Ascending aorta (tissue), 2 donors: ENCODE measurements at regions of chr10 and their contacts with region 1.

Region 1: GRCh38 chr10:31118556-31118955 is 86.9 kb upstream of the ZNF438 start:
- DNase-seq: peak in 1 of 2 donors; percentile 75
- H3K4me3 ChIP-seq: no peak overlapping the region
- H3K27ac ChIP-seq: peak overlapping the region; percentile 75 to 86
- H3K4me1 ChIP-seq: peaks cover 8 to 24% of the 10 kb centered on the region in 2 donors
- H3K27me3 ChIP-seq: no peaks in the 10 kb centered on the region
- CTCF ChIP-seq: no peak

Region 2: GRCh38 chr10:31075434-31075833 is 43.1 kb before region 1 on chr10:
- intact Hi-C with region 1: loop called (anchors 2 kb)
- DNase-seq: no peak
- H3K4me3 ChIP-seq: no peak overlapping the region
- H3K27ac ChIP-seq: peak overlapping the region; percentile 82 to 94
- H3K4me1 ChIP-seq: peaks cover 13 to 46% of the 10 kb centered on the region in 2 donors
- H3K27me3 ChIP-seq: no peaks in the 10 kb centered on the region
- CTCF ChIP-seq: no peak

Region 3: GRCh38 chr10:31133628-31134302 is 15.2 kb after region 1 on chr10:
- intact Hi-C with region 1: no loop called
- DNase-seq: peak; percentile 26 to 89
- H3K4me3 ChIP-seq: peak overlapping the region; percentile 61 to 74
- H3K27ac ChIP-seq: peak overlapping the region; percentile 95 to 96
- H3K4me1 ChIP-seq: peaks cover 3 to 22% of the 10 kb centered on the region in 2 donors
- H3K27me3 ChIP-seq: no peaks in the 10 kb centered on the region
- CTCF ChIP-seq: no peak